ENCODE measurements at regions of chr14 and their contacts with region 1.

Region 1: GRCh38 chr14:36373982-36374673 is 53.7 kb upstream of the MBIP start:
- DNase-seq: peak; percentile 90
- H3K4me3 Mint-ChIP-seq: no peak overlapping the region
- H3K27ac Mint-ChIP-seq: no peak overlapping the region
- H3K4me1 Mint-ChIP-seq: no peaks in the 10 kb centered on the region
- H3K27me3 Mint-ChIP-seq: peaks cover 5% of the 10 kb centered on the region

Region 2: GRCh38 chr14:35883677-35884293 is 490.3 kb before region 1 on chr14:
- intact Hi-C with region 1: loop called (anchors 2 kb)
- DNase-seq: peak; percentile 68
- H3K4me3 Mint-ChIP-seq: no peak overlapping the region
- H3K27ac Mint-ChIP-seq: no peak overlapping the region
- H3K4me1 Mint-ChIP-seq: peaks cover under 1% of the 10 kb centered on the region
- H3K27me3 Mint-ChIP-seq: peaks cover 13% of the 10 kb centered on the region

Region 3: DNA sequence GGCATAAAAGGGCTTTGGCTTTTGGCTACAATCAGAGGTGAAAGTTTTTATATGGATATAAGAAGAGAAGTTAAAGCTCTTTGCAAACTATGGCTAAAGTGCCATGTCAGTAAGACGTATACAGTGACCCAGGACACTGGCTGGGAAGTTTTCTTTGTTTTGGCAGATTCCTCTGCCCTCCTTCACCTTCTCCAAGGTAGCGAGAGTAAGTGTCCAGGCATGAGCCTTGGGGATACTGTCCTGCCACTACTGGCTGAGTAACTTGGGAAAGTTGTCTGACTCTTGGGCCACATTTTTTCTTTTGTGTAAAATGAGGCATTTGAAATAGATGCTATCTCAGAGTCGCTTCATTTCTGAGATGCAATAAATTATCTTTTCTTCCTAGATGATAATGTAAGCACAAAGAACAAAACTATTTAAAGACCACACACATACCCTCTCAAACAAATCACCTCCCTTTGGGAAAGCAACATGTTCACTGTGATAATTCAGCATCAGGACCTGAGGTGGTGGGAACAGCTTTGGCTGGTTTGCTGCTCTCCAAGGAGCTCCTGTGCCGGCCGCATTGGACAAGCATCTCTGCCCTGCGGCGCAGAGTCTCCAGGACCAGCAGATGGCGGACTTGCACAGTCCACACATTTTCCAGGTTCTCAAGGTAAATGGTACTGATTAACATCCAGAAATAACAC is 304.0 kb before region 1 on chr14:
- intact Hi-C with region 1: loop called (anchors 1 kb)
- DNase-seq: peak; percentile 78
- H3K4me3 Mint-ChIP-seq: no peak overlapping the region
- H3K27ac Mint-ChIP-seq: no peak overlapping the region
- H3K4me1 Mint-ChIP-seq: no peaks in the 10 kb centered on the region
- H3K27me3 Mint-ChIP-seq: peaks cover 23% of the 10 kb centered on the region

Region 4: DNA sequence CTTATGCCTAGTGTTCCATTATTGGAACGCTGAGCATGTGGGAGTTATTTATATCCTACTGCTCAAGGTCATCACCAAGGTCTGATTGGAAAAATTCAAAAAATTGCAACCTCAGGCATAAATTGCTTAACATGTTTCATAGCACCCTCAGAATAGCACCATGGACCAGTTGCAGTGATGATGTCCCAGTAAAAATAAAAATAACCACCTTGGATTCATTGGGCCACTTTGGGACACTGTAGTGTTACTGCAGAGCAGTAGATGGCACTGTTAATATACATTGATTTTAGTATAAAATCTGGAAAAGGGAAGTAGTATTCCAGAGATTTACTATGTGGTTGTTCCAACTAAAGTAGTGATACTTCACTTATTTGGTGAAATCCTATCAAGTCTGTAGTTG is 166.6 kb before region 1 on chr14:
- intact Hi-C with region 1: loop called (anchors 5 kb)
- DNase-seq: no peak
- H3K4me3 Mint-ChIP-seq: no peak overlapping the region
- H3K27ac Mint-ChIP-seq: no peak overlapping the region
- H3K4me1 Mint-ChIP-seq: no peaks in the 10 kb centered on the region
- H3K27me3 Mint-ChIP-seq: peaks cover 2% of the 10 kb centered on the region

Region 5: GRCh38 chr14:36238666-36239363 is 135.3 kb before region 1 on chr14:
- intact Hi-C with region 1: loop called (anchors 10 kb)
- DNase-seq: no peak
- H3K4me3 Mint-ChIP-seq: no peak overlapping the region
- H3K27ac Mint-ChIP-seq: no peak overlapping the region
- H3K4me1 Mint-ChIP-seq: peaks cover 3% of the 10 kb centered on the region
- H3K27me3 Mint-ChIP-seq: peaks cover 3% of the 10 kb centered on the region

Measured in activated CD4-positive, alpha-beta T cell treated with anti-CD3 and anti-CD28 coated beads, Interleukin-2, amount 10 ng/mL, durations not matched to agents 24 days and 14 days (primary cell).